ENCODE measurements at regions of chr15 and their contacts with region 1.

Region 1: DNA sequence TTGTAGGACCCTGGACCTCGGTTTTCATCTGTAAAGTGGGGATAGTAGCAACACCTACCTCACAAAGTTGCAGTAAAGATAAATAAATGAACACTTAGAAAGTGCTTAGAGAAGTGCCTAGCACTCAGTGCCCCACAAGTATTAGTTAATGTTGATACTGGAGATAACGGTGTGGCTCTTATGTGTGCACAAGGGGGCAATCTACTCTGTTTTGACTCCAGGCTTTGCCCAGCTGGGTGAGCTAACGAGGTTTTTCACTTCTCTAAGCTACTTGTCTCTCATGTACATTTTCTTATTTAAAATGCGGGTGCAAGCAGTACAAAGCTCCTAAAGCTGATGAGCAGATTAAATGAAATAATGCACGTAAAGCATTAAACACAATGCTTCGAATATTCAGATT is 193.5 kb upstream of the ICE2 start:
- DNase-seq: peak in 2 of 9 donors; percentile 5 to 12
- ATAC-seq: no peak
- H3K4me3 ChIP-seq: no peak overlapping the region
- H3K4me3 Mint-ChIP-seq: no peak overlapping the region
- H3K27ac ChIP-seq: no peak overlapping the region
- H3K27ac Mint-ChIP-seq: no peak overlapping the region
- H3K4me1 ChIP-seq: peaks cover 0 to 3% of the 10 kb centered on the region in 2 donors
- H3K4me1 Mint-ChIP-seq: peaks cover 0 to 7% (median 0%) of the 10 kb centered on the region in 7 donors
- H3K27me3 ChIP-seq: no peaks in the 10 kb centered on the region
- H3K27me3 Mint-ChIP-seq: peaks cover 0 to 2% (median 0%) of the 10 kb centered on the region in 5 donors

Region 2: GRCh38 chr15:60865507-60865906 is 193.1 kb after region 1 on chr15:
- CTCF ChIA-PET with region 1: interaction called, 6 read pairs
- POLR2A ChIA-PET with region 1: interaction called, 3 read pairs
- intact Hi-C with region 1: loop called in 1 of 2 experiments (anchors 1 kb)
- DNase-seq: no peak
- ATAC-seq: no peak
- H3K4me3 ChIP-seq: no peak overlapping the region
- H3K4me3 Mint-ChIP-seq: no peak overlapping the region
- H3K27ac ChIP-seq: no peak overlapping the region
- H3K27ac Mint-ChIP-seq: peak overlapping the region in 1 of 9 donors; percentile 46
- H3K4me1 ChIP-seq: peaks cover 3 to 6% of the 10 kb centered on the region in 2 donors
- H3K4me1 Mint-ChIP-seq: peaks cover 2 to 22% (median 16%) of the 10 kb centered on the region in 7 donors
- H3K27me3 ChIP-seq: no peaks in the 10 kb centered on the region
- H3K27me3 Mint-ChIP-seq: peaks cover 0 to 8% (median 0%) of the 10 kb centered on the region in 5 donors

Region 3: GRCh38 chr15:60905587-60905986 is 233.2 kb after region 1 on chr15:
- CTCF ChIA-PET with region 1: no interaction called
- POLR2A ChIA-PET with region 1: no interaction called
- intact Hi-C with region 1: loop called in 1 of 2 experiments (anchors 1 kb)
- DNase-seq: peak in 6 of 9 donors; percentile 24 to 45 (median 38)
- ATAC-seq: peak; percentile 68
- H3K4me3 ChIP-seq: no peak overlapping the region
- H3K4me3 Mint-ChIP-seq: no peak overlapping the region
- H3K27ac ChIP-seq: no peak overlapping the region
- H3K27ac Mint-ChIP-seq: peak overlapping the region in 1 of 9 donors; percentile 16
- H3K4me1 ChIP-seq: no peaks in the 10 kb centered on the region
- H3K4me1 Mint-ChIP-seq: peaks cover 0 to 38% (median 2%) of the 10 kb centered on the region in 7 donors
- H3K27me3 ChIP-seq: no peaks in the 10 kb centered on the region
- H3K27me3 Mint-ChIP-seq: peaks cover 0 to 17% (median 0%) of the 10 kb centered on the region in 5 donors